ENCODE measurements at regions of chr10 and their contacts with region 1.

Region 1: GRCh38 chr10:13299437-13300287 is at the start of gene PHYH:
- DNase-seq: peak; percentile 84
- ATAC-seq: peak; percentile 77
- H3K4me3 Mint-ChIP-seq: peak within 1 kb of the TSS; percentile 81
- H3K27ac Mint-ChIP-seq: peak within 1 kb of the TSS; percentile 85
- H3K4me1 Mint-ChIP-seq: peaks cover 27% of the 10 kb centered on the region
- H3K27me3 Mint-ChIP-seq: no peaks in the 10 kb centered on the region
- total RNA-seq, gene PHYH: 13.6 to 14.4 TPM

Region 2: DNA sequence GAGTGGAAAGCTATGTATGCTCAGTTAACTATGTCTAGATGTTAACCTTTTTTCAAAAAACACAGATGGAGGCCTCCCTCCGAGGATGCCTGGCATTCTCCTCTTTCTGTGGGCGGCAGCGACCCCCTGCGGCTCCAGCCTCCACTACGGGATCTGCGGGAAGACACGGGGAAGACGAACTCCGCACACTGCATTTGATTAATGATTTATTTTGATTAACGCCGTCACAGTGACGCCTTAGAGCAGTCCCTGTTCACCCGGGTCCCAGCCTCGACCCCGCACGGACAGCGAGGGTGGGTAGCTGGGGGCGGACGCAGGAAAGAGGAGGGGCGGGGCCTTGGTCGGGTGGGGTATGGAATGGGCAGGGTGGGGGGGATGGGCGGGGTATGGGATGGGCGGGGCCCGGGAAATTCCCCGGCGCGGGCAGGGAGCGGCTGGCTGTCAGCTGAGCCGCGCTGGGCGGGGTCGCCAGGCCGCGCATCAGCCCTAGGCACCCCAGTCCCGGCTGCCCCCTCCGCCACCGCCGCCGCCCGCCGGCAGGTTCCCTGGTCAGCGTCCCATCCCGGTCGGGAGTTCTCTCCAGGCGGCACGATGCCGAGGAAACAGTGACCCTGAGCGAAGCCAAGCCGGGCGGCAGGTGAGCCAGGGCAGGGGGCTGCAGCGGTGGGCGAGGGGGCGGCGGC is 199.9 kb before region 1 on chr10 and contains the start of gene OPTN:
- CTCF ChIA-PET with region 1: interaction called, 12 read pairs
- DNase-seq: peak; percentile 87
- ATAC-seq: peak; percentile 80
- H3K4me3 Mint-ChIP-seq: peak within 1 kb of the TSS; percentile 92
- H3K27ac Mint-ChIP-seq: peak within 1 kb of the TSS; percentile 89
- H3K4me1 Mint-ChIP-seq: peaks cover 41% of the 10 kb centered on the region
- H3K27me3 Mint-ChIP-seq: no peaks in the 10 kb centered on the region
- total RNA-seq, gene OPTN: 111 to 112 TPM

Region 3: GRCh38 chr10:13160934-13161856 is 138.5 kb before region 1 on chr10 and contains the start of gene MCM10:
- CTCF ChIA-PET with region 1: interaction called, 55 read pairs
- DNase-seq: peak; percentile 99
- ATAC-seq: peak; percentile 99
- H3K4me3 Mint-ChIP-seq: peak within 1 kb of the TSS; percentile 88
- H3K27ac Mint-ChIP-seq: peak within 1 kb of the TSS; percentile 84
- H3K4me1 Mint-ChIP-seq: peaks cover 47% of the 10 kb centered on the region
- H3K27me3 Mint-ChIP-seq: peaks cover 2% of the 10 kb centered on the region
- total RNA-seq, gene MCM10: 75.1 to 78.2 TPM

Region 4: GRCh38 chr10:13206546-13207443 is 92.9 kb before region 1 on chr10:
- CTCF ChIA-PET with region 1: interaction called, 19 read pairs
- DNase-seq: no peak
- ATAC-seq: no peak
- H3K4me3 Mint-ChIP-seq: no peak overlapping the region
- H3K27ac Mint-ChIP-seq: no peak overlapping the region
- H3K4me1 Mint-ChIP-seq: no peaks in the 10 kb centered on the region
- H3K27me3 Mint-ChIP-seq: no peaks in the 10 kb centered on the region

Region 5: DNA sequence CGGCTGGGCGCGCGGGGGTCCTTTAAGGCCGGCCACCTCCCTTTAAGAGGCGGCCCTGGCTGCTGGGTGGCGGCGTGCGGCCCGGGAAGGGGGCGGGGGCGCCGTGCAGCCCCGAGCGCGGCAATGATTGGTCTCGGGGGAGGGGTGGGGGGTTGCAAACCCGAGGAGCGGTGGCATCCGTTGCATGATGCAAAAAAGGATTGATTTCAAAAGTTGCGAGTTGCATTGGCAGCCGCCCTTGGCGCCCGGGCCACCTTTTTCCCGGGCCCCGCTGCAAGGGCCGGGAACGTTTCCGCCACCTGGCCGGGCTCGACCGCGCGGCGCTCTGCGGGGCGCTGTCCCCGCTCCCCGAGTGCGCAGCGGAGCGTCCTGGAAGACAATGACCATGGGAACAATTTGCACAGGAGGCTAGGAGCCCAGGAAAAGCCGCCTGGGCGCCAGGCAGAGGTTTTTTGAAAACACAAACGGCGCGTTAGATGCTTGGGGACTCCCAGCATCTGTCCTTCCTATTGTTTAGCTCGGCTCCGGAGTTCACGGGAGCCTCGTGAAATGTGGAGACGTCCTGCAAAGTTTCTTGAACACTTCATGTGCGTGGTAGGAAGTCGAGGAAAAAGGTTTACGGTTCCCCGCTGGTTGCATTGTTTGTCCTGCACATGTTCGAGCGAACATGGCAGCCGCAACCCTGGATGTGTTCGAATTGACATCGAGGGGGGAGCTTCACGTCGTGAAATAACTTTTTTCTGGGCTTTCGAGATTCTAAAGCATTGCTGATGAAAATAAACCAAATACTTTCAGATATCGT is 48.8 kb after region 1 on chr10 and contains the start of gene SEPHS1:
- CTCF ChIA-PET with region 1: interaction called, 39 read pairs
- DNase-seq: peak; percentile 86
- ATAC-seq: peak; percentile 80
- H3K4me3 Mint-ChIP-seq: peak within 1 kb of the TSS; percentile 85
- H3K27ac Mint-ChIP-seq: peak within 1 kb of the TSS; percentile 93
- H3K4me1 Mint-ChIP-seq: peaks cover 58% of the 10 kb centered on the region
- H3K27me3 Mint-ChIP-seq: peaks cover 2% of the 10 kb centered on the region
- total RNA-seq, gene SEPHS1: 48.9 to 55.2 TPM

Measured in activated CD8-positive, alpha-beta memory T cell treated with anti-CD3 and anti-CD28 coated beads, Interleukin-2, amount 10 ng/mL, durations not matched to agents 7 days and 5 days (primary cell).